MCF 10A (cell line): ENCODE measurements at regions of chr2 and their contacts with region 1.

Region 1: DNA sequence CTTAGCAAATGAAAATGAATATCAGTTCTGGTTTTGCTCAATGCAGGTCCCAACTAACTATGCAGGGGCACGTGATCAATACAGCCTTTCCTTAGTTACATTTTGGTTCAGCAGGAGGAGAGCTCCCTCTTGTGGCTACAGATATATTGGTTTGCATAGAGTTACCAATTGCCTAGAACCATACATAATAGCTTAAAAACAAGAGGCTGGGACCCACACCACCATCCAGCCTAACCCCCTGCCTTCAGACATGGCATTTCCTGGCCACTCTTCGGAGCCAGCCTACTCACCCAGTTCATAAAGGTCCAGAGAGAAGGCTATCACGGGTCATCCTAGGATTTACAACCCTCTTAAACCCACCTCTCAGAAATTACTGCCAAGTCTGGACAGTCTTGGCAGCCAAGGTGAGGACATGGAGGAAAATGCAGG is 10.5 kb downstream of the CCDC93 start:
- DNase-seq: peak; percentile 80
- H3K4me3 Mint-ChIP-seq: no peak overlapping the region
- H3K27ac Mint-ChIP-seq: no peak overlapping the region
- H3K4me1 Mint-ChIP-seq: peaks cover 4% of the 10 kb centered on the region
- H3K27me3 Mint-ChIP-seq: no peaks in the 10 kb centered on the region
- CTCF ChIP-seq: peak; percentile 68

Region 2: GRCh38 chr2:117717072-117717471 is 286.3 kb before region 1 on chr2:
- CTCF ChIA-PET with region 1: no interaction called
- POLR2A ChIA-PET with region 1: no interaction called
- intact Hi-C with region 1: no loop called
- DNase-seq: no peak
- H3K4me3 Mint-ChIP-seq: no peak overlapping the region
- H3K27ac Mint-ChIP-seq: no peak overlapping the region
- H3K4me1 Mint-ChIP-seq: no peaks in the 10 kb centered on the region
- H3K27me3 Mint-ChIP-seq: no peaks in the 10 kb centered on the region
- CTCF ChIP-seq: no peak

Region 3: DNA sequence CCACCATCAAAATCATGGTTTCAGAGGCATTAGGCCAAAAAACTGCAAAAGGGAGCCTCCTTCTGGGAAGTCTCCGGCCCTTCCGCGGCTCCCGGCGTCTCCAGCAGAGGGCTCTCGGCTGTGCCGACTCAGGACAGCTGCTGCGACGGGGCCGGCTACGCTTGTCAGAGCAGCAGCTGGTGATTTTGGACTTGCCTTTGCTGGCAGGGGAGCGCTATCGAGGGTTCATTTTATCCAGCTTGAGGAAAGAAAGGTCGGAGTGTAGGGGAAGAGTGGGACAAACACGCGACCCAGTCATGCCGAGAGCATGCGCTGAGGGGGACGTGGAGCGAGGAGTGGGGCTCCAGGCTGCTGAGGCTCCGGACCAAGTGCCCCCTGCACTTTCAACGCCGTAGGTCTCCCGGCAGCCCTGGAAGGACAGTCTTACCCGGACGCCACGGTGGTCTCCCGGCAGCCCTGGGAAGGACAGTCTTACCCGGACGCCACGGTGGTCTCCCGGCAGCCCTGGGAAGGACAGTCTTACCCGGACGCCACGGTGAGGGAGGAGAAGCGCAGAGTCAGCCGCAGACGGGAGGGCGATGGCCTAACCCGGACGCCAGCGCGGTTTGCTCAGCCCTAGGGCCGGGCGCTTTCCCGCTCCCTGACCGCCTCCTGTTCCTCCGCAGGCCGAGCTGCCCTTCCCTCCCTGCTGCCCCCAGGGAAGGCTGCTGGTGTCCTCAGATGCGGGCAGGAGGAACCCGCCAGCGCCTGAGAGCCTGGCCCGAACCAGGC is 167.2 kb before region 1 on chr2:
- CTCF ChIA-PET with region 1: interaction called, 13 read pairs
- POLR2A ChIA-PET with region 1: no interaction called
- intact Hi-C with region 1: loop called (anchors 1 kb)
- DNase-seq: peak; percentile 43
- H3K4me3 Mint-ChIP-seq: no peak overlapping the region
- H3K27ac Mint-ChIP-seq: no peak overlapping the region
- H3K4me1 Mint-ChIP-seq: no peaks in the 10 kb centered on the region
- H3K27me3 Mint-ChIP-seq: no peaks in the 10 kb centered on the region
- CTCF ChIP-seq: peak; percentile 54

Region 4: DNA sequence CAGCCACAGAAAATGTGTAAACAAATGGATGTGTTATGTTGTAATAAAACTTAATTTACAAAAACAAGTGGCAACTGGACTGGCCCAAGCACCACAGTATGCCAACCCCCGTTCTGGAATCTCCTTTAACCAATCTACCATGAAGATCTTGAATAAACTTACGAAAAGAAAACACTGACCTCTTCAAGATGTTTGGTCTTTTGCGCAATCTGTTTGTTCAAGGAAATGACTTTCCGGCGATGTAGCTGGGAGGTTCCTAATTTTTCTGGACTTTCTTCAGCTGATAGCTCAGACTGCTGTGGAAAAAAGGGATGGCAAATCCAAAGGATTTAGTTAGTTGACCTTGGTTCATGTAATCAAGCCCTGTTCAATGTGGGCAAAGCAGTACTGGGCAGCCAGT is 45.2 kb before region 1 on chr2:
- CTCF ChIA-PET with region 1: interaction called, 25 read pairs
- POLR2A ChIA-PET with region 1: no interaction called
- intact Hi-C with region 1: loop called (anchors 1 kb)
- DNase-seq: peak; percentile 86
- H3K4me3 Mint-ChIP-seq: no peak overlapping the region
- H3K27ac Mint-ChIP-seq: peak overlapping the region; percentile 76
- H3K4me1 Mint-ChIP-seq: peaks cover 22% of the 10 kb centered on the region
- H3K27me3 Mint-ChIP-seq: no peaks in the 10 kb centered on the region
- CTCF ChIP-seq: no peak

Region 5: DNA sequence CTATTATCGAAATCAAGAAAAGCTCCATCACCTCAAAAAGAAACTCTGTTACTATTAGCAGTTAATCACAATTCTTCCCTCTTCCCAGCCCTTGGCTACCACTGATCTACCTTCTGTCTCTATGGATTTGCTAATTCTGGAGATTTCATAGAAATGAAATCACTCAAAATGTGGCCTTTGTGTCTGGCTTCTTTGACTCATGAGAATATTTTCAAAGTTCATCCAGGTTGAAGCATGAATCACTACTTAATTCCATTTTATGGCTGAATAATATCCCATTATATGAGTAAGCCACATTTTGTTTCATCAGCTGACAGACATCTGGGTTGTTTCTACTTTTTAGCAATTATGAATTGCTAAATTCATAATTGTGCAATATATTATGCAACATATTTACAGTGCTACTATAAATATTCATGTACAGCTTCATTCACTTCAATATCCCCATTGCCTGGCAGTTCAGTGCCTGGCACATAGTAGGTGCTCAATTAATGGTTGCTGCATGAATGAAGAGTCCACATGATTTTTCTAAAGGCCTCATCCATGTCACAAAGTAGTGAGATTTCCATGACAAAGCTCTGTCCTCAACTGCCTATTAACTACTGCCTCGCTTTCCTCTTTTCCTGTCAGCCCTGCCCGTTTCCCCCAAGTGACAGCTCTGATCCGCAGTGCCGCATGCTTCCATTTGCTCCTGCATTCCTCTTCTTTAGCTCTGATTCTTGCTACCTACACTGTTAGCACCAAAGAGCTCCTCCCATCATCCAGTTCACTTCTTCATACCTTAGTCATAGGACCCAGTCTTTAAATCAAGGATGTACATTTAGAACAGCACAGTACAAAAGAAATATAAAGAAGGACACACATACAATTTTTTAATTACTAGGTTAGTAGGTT is 22.4 kb before region 1 on chr2:
- CTCF ChIA-PET with region 1: interaction called, 138 read pairs
- POLR2A ChIA-PET with region 1: interaction called, 7 read pairs
- intact Hi-C with region 1: no loop called
- DNase-seq: peak; percentile 88
- H3K4me3 Mint-ChIP-seq: peak overlapping the region; percentile 35
- H3K27ac Mint-ChIP-seq: peak overlapping the region; percentile 79
- H3K4me1 Mint-ChIP-seq: peaks cover 23% of the 10 kb centered on the region
- H3K27me3 Mint-ChIP-seq: no peaks in the 10 kb centered on the region
- CTCF ChIP-seq: no peak

Region 6: DNA sequence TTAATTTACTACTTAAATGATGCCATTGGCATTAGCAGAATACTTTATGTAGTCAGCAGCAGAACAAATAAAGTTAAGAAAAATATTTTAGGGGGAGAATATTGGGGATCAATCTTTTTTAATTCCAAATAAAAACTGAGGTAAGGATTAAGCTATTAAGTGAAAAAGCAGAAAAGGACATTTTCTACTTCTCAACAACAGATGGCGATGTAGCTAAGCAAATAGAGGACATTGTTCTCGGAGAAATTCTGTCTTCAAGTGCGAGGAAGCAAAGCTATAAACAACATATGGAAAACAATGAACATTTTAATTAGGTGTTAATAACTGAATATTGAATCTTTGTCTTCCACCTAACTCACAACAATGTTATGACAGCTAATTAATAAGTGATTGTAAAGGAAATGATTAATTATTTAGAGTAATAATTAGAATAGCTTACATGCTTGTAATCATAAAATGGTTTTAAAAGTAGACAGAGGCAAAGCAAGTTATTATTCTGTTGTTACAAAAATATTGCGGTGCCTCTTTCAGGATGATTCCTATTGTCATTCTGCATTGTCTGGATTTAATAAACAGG is 43.3 kb after region 1 on chr2:
- CTCF ChIA-PET with region 1: interaction called, 10 read pairs
- POLR2A ChIA-PET with region 1: no interaction called
- intact Hi-C with region 1: no loop called
- DNase-seq: peak; percentile 44
- H3K4me3 Mint-ChIP-seq: no peak overlapping the region
- H3K27ac Mint-ChIP-seq: no peak overlapping the region
- H3K4me1 Mint-ChIP-seq: peaks cover 5% of the 10 kb centered on the region
- H3K27me3 Mint-ChIP-seq: peaks cover 32% of the 10 kb centered on the region
- CTCF ChIP-seq: peak; percentile 54